Caco-2 (cell line): ENCODE measurements at regions of chr11 and their contacts with region 1.

Region 1: DNA sequence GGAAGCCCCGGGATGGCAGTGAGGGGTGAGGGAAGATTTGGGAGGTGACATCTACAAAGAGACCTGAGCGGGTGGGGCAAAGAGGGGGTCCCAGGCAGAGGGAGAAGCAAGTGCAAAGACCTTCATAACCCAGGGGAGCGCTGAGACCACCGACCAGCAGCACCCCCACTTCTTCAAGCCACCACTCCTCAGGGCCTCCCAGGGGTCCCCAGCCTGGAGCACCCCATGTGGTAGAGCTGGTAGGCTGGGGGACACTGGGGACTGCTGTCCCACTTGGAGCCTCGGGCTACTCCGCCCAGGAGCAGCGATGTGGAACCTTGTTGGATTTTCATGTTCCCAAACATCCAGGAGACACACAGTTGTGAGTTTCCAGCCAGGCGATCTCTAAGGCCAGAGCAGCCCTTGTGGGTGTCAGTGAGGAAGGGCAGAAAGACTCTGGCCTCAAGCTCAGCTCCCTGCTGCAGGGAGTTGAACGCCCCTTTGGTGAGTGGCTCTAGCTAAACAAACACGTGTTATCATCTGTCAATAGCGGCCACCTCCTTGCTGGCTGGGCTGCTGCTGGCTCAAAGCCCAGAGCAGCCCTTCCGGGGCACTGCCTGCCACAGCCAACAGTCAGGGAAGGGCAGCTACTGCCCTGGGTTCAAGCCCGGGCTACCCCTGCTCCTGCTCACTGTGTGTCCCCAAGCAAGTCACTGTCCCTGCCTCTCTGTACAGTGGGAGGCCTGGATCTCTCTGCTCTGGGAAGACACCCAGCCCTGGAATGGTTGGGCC is 25.7 kb upstream of the CHKA start:
- DNase-seq: peak; percentile 88 to 94
- H3K4me3 ChIP-seq: no peak overlapping the region
- H3K4me3 Mint-ChIP-seq: no peak overlapping the region
- H3K27ac Mint-ChIP-seq: peak overlapping the region; percentile 0
- H3K4me1 ChIP-seq: peaks cover 41% of the 10 kb centered on the region
- H3K4me1 Mint-ChIP-seq: peaks cover 26% of the 10 kb centered on the region
- H3K27me3 ChIP-seq: no peaks in the 10 kb centered on the region
- H3K27me3 Mint-ChIP-seq: no peaks in the 10 kb centered on the region
- CTCF ChIP-seq: peak in 1 of 2 experiments; percentile 6

Region 2: DNA sequence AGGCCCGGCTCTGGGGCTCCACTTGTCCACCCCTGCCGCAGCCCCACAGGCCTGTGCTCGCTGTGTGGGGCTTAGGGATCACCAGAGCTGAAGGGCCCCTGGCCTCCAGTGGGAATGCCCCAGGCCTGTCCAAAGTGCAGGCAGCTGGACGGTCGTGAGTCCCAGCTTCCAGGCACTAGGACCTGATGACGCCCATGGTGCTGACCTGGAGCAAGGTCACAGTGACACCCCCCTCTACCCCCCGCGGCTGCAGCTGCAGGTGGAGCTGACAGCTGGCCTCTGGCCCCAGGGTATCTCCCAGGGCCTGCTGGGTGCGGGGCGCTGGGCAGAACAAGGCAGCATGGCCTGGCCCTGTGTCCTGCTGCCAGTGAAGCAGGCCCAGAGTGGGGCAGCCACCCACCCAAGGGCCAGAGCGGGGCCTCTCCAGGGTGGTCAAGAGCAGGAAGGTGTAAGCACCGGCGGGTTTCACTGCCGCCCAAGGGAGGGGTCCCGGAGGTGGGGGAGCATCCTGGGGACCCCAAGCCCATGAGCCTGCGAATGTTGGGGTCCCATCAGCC is 108.7 kb before region 1 on chr11:
- CTCF ChIA-PET with region 1: no interaction called
- POLR2A ChIA-PET with region 1: interaction called, 11 read pairs
- intact Hi-C with region 1: no loop called
- DNase-seq: peak; percentile 90 to 96
- H3K4me3 ChIP-seq: no peak overlapping the region
- H3K4me3 Mint-ChIP-seq: no peak overlapping the region
- H3K27ac Mint-ChIP-seq: peak overlapping the region; percentile 39
- H3K4me1 ChIP-seq: peaks cover 36% of the 10 kb centered on the region
- H3K4me1 Mint-ChIP-seq: peaks cover 22% of the 10 kb centered on the region
- H3K27me3 ChIP-seq: no peaks in the 10 kb centered on the region
- H3K27me3 Mint-ChIP-seq: no peaks in the 10 kb centered on the region
- CTCF ChIP-seq: no peak

Region 3: GRCh38 chr11:68127714-68128681 is 18.9 kb before region 1 on chr11:
- CTCF ChIA-PET with region 1: interaction called, 4 read pairs
- POLR2A ChIA-PET with region 1: interaction called, 12 read pairs
- intact Hi-C with region 1: loop called (anchors 1 kb)
- DNase-seq: peak; percentile 98 to 99
- H3K4me3 ChIP-seq: peak overlapping the region; percentile 40
- H3K4me3 Mint-ChIP-seq: peak overlapping the region; percentile 67
- H3K27ac Mint-ChIP-seq: peak overlapping the region; percentile 79
- H3K4me1 ChIP-seq: peaks cover 64% of the 10 kb centered on the region
- H3K4me1 Mint-ChIP-seq: peaks cover 26% of the 10 kb centered on the region
- H3K27me3 ChIP-seq: no peaks in the 10 kb centered on the region
- H3K27me3 Mint-ChIP-seq: no peaks in the 10 kb centered on the region
- CTCF ChIP-seq: no peak

Region 4: DNA sequence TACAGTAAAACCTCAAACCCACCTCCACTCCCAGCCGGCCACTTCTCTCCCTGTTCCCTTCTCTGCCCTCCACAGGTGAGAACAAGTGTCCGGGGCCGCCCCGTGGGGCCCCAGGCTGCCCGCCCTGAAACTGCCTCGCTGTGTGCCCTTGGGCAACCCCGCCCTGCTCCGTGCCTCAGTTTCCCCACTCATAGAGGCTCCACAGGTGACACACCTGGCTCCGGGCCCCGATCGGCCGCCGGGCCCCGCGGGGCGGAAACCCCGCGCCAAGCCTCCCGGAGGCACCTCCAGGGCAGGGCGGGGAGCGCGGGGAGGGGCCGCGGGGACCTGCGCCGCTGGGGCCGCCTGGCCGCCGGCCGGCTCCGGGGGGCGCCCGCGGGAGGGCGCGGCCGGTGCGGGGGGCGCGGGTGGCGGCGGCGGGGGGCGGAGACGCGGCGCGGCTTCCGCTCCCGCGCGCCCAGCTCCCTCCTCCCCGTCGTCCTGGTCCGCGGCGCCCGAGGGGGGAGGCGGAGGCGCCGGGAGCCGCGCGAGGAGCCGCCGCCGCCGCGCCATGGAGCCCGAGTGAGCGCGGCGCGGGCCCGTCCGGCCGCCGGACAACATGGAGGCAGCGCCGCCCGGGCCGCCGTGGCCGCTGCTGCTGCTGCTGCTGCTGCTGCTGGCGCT is 165.4 kb after region 1 on chr11 and contains the start of gene LRP5:
- CTCF ChIA-PET with region 1: no interaction called
- POLR2A ChIA-PET with region 1: no interaction called
- intact Hi-C with region 1: no loop called
- DNase-seq: peak; percentile 58 to 80
- H3K4me3 ChIP-seq: peak within 1 kb of the TSS; percentile 89
- H3K4me3 Mint-ChIP-seq: peak within 1 kb of the TSS; percentile 91
- H3K27ac Mint-ChIP-seq: peak within 1 kb of the TSS; percentile 89
- H3K4me1 ChIP-seq: peaks cover 22% of the 10 kb centered on the region
- H3K4me1 Mint-ChIP-seq: peaks cover 44% of the 10 kb centered on the region
- H3K27me3 ChIP-seq: no peaks in the 10 kb centered on the region
- H3K27me3 Mint-ChIP-seq: no peaks in the 10 kb centered on the region
- CTCF ChIP-seq: no peak
- total RNA-seq, gene LRP5: 94.3 TPM in 2 replicates

Region 5: DNA sequence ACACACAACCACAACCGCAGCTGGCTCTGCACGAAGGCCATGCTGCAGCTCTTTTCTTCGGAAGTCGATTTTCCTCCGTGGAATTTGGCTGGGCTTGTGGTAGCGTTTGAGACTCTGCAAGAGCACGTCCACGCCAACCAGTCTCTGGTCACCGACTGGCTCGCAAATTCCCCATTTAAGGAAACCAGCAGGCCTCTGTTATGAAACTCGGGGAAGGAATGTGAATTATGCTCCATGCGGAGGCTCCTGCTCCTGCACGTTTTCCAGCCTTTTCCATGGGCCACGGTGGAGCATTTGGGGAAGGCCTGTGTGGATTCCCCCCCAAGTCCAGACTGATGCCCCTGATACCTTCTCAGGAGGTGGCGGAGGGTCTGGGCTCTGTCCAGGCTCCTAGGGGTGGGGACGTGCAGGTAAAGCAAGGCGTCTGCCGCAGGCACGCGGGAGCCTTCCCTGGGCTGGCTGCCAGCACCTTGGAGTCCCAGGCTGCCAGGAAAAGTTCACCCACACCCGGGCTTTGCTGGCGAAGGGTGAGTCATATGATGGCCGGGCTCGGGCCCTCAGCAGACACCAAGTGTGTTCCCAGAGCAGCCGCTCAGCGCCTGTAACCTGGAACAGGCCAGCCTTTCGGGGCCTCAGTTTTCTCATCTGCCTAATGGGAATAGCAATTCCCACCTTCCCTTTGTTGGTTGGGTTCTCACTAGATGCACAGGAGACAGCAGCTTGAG is 207.4 kb after region 1 on chr11:
- CTCF ChIA-PET with region 1: no interaction called
- POLR2A ChIA-PET with region 1: no interaction called
- intact Hi-C with region 1: no loop called
- DNase-seq: no peak
- H3K4me3 ChIP-seq: no peak overlapping the region
- H3K4me3 Mint-ChIP-seq: no peak overlapping the region
- H3K27ac Mint-ChIP-seq: no peak overlapping the region
- H3K4me1 ChIP-seq: peaks cover 13% of the 10 kb centered on the region
- H3K4me1 Mint-ChIP-seq: peaks cover 17% of the 10 kb centered on the region
- H3K27me3 ChIP-seq: no peaks in the 10 kb centered on the region
- H3K27me3 Mint-ChIP-seq: no peaks in the 10 kb centered on the region
- CTCF ChIP-seq: no peak